ENCODE measurements at regions of chr11 and their contacts with region 1.

Region 1: DNA sequence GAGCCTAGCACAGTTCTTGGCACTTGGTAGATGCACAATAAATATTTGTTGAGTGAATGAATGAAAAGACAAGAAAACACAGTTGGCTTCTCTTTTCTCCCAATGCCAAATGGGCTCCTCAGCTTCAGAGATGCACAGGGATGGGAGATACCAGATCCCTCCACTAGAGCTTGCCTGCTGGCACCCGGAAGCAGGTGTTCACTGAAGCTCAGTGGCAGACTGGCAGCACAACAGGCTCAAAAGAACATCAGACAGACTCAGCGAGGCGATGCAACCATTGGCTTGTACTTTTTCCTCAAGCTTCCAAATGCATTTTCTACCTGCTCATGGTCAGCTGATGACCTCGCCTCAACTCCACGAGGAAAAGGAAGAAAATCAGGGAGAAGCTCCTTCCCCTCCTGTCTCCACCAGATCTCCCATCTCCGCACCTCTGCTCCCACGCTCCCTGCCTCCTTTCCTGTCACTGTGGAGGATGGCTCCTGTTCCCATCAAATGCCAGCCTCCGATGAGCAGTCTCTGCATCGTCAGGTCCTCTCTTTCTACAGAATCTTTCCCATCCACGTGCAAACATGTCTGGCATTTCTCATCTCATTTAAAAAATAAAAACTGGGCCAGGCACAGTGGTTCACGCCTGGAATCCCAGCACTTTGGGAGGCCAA is 5.8 kb downstream of the RAPSN start:
- DNase-seq: no peak
- H3K4me3 ChIP-seq: no peak overlapping the region
- H3K4me3 Mint-ChIP-seq: no peak overlapping the region
- H3K27ac Mint-ChIP-seq: no peak overlapping the region
- H3K4me1 ChIP-seq: no peaks in the 10 kb centered on the region
- H3K4me1 Mint-ChIP-seq: no peaks in the 10 kb centered on the region
- H3K27me3 ChIP-seq: no peaks in the 10 kb centered on the region
- H3K27me3 Mint-ChIP-seq: no peaks in the 10 kb centered on the region
- CTCF ChIP-seq: no peak

Region 2: DNA sequence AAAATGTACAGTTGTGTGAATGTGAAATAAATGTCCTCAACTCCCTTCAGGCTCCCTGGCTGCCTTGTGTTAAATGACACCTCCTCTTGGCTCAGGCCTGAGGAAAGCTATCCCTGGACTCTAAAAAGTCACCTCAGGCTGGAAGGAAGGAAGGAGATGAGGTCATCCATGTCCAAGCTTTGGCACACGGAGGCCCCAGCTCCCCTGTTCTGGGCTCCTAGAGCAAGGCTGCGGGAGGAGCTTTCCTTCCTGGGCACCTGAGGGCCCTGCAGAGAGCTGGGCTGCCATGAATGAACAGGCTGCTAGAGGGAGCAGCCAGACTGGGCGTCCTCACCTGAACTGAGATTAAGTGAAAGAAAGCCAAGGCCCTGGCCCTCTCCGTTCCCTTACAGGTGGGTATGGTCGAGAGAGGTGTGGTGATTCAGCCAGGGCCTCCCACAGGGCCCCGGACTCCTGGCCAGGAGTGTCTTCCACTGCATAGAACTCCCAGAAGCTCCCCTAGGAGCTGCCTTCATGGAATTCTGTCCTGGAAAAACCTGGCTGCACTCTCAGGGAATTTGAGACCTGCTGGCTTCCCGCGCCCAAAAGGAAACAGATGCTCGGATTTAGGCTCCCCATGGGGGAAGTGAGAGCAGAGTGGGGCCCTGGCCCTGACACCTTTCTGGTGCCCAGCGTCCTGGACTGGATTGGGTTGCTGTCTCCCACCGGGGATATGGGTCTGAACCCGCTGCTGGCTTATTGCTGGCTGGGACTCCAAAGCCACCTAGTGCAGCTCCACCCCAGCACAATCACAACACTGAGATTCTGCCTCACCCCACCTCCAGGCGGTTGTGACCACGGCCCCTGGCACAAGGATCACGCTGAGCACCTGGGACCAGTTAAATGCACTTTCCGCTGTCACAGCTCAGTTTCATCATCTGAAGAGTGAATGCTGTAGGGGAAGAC is 112.9 kb before region 1 on chr11:
- CTCF ChIA-PET with region 1: no interaction called
- POLR2A ChIA-PET with region 1: no interaction called
- intact Hi-C with region 1: no loop called
- DNase-seq: peak in 1 of 2 experiments; percentile 33
- H3K4me3 ChIP-seq: no peak overlapping the region
- H3K4me3 Mint-ChIP-seq: no peak overlapping the region
- H3K27ac Mint-ChIP-seq: peak overlapping the region; percentile 67
- H3K4me1 ChIP-seq: no peaks in the 10 kb centered on the region
- H3K4me1 Mint-ChIP-seq: no peaks in the 10 kb centered on the region
- H3K27me3 ChIP-seq: no peaks in the 10 kb centered on the region
- H3K27me3 Mint-ChIP-seq: no peaks in the 10 kb centered on the region
- CTCF ChIP-seq: no peak

Region 3: DNA sequence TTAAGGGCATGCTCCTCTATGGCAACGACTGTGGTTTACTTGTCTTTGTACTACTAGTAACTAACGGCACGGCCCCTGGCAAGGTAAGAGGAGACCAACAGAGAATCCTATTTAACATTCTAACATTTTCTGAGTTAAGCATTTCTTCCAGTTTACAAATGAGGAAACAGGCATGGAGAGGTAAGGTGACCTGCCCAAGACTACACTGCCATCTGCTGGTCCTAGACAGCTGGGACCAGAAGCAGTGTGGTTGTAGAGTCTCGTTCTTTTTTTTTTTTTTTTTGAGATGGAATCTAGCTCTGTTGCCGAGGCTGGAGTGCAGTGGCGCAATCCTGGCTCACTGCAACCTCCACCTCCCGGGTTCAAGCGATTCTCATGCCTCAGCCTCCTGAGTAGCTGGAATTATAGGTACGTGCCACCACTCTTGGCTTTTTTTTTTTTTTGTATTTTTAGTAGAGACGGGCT is 11.0 kb after region 1 on chr11:
- CTCF ChIA-PET with region 1: interaction called, 15 read pairs
- POLR2A ChIA-PET with region 1: no interaction called
- intact Hi-C with region 1: no loop called
- DNase-seq: peak; percentile 83 to 88
- H3K4me3 ChIP-seq: no peak overlapping the region
- H3K4me3 Mint-ChIP-seq: no peak overlapping the region
- H3K27ac Mint-ChIP-seq: peak overlapping the region; percentile 40
- H3K4me1 ChIP-seq: no peaks in the 10 kb centered on the region
- H3K4me1 Mint-ChIP-seq: no peaks in the 10 kb centered on the region
- H3K27me3 ChIP-seq: no peaks in the 10 kb centered on the region
- H3K27me3 Mint-ChIP-seq: no peaks in the 10 kb centered on the region
- CTCF ChIP-seq: peak; percentile 67 to 93

Region 4: GRCh38 chr11:47514825-47515647 is 71.9 kb after region 1 on chr11:
- CTCF ChIA-PET with region 1: no interaction called
- POLR2A ChIA-PET with region 1: no interaction called
- intact Hi-C with region 1: no loop called
- DNase-seq: no peak
- H3K4me3 ChIP-seq: no peak overlapping the region
- H3K4me3 Mint-ChIP-seq: no peak overlapping the region
- H3K27ac Mint-ChIP-seq: peak overlapping the region; percentile 63
- H3K4me1 ChIP-seq: peaks cover 27% of the 10 kb centered on the region
- H3K4me1 Mint-ChIP-seq: peaks cover 29% of the 10 kb centered on the region
- H3K27me3 ChIP-seq: no peaks in the 10 kb centered on the region
- H3K27me3 Mint-ChIP-seq: no peaks in the 10 kb centered on the region
- CTCF ChIP-seq: no peak